PC-9 (cell line): ENCODE measurements at regions of chr18 and their contacts with region 1.

Region 1: GRCh38 chr18:12589448-12589847 is 68.5 kb downstream of the SPIRE1 start:
- DNase-seq: no peak
- H3K4me3 ChIP-seq: no peak overlapping the region
- H3K27ac ChIP-seq: no peak overlapping the region
- H3K4me1 ChIP-seq: no peaks in the 10 kb centered on the region; the same call in 1 of the 2 replicates
- H3K27me3 ChIP-seq: no peaks in the 10 kb centered on the region
- CTCF ChIP-seq: no peak

Region 2: GRCh38 chr18:12516049-12516630 is 73.3 kb before region 1 on chr18:
- CTCF ChIA-PET with region 1: no interaction called
- POLR2A ChIA-PET with region 1: interaction called, 14 read pairs
- intact Hi-C with region 1: no loop called
- DNase-seq: no peak
- H3K4me3 ChIP-seq: no peak overlapping the region
- H3K27ac ChIP-seq: no peak overlapping the region
- H3K4me1 ChIP-seq: no peaks in the 10 kb centered on the region
- H3K27me3 ChIP-seq: no peaks in the 10 kb centered on the region
- CTCF ChIP-seq: no peak

Region 3: GRCh38 chr18:12571630-12572029 is 17.8 kb before region 1 on chr18:
- CTCF ChIA-PET with region 1: no interaction called
- POLR2A ChIA-PET with region 1: no interaction called
- intact Hi-C with region 1: no loop called
- DNase-seq: no peak
- H3K4me3 ChIP-seq: no peak overlapping the region
- H3K27ac ChIP-seq: no peak overlapping the region
- H3K4me1 ChIP-seq: 0 out of 2 replicates have a peak, but pooled peaks cover 5% of the 10 kb centered on the region
- H3K27me3 ChIP-seq: no peaks in the 10 kb centered on the region
- CTCF ChIP-seq: no peak